ENCODE measurements at regions of chr2 and their contacts with region 1.

Region 1: DNA sequence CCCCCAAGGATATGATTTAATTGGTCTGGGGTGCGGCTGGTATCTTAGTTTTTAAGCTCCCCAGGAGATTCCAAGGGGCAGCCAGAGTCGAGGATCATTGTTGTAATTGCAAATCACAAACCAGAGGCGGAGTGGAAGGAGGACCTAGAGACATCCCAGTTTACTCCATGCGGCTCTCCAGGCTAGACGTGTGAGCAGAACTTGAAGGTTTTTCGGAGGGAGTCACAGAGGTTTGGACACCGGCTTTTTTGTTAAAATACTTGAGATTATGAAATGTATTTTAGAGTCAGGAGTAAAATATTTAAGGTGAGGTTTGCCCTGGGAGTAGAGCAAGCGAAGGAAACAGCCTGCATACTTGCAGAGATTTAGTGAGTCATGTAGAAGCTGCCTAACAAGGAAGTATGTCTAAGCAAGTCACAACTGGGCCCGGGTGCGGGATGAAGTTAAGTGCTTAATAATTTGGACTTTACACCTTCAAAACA is 39.5 kb downstream of the TGOLN2 start:
- DNase-seq: no peak
- CTCF ChIP-seq: no peak

Region 2: DNA sequence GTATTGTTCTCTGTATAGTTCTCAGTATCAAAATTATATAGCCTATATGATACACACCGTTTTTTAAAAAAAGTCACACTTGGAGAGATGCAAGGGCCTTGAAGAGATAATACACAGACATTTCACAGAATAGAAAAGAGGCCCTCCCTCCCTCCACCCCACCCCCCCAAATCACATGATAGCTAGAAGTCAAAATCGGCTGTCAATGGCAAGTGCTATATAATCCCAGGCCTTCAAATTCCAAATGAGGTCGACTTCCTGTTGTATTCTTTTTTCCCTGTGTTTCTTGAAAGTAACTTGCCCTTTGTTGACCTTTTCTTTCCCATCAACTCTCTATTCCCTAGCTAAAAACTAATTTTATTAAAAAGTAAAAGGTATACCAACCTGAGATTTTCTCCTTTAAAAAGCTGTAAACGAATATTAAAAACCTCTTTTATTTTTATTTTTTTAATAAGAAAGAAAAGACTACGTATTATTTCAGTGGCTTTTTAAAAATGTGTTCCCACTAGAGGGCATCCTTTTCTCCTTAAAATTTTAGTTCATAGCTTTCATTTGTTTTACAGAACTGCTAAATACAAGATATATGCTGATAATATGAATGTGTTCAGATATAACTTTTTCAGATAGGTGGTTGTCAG is 270.8 kb before region 1 on chr2:
- CTCF ChIA-PET with region 1: interaction called, 12 read pairs
- POLR2A ChIA-PET with region 1: no interaction called
- DNase-seq: no peak
- CTCF ChIP-seq: no peak

Region 3: GRCh38 chr2:85066874-85067351 is 221.4 kb before region 1 on chr2:
- CTCF ChIA-PET with region 1: interaction called, 25 read pairs
- POLR2A ChIA-PET with region 1: no interaction called
- DNase-seq: peak; percentile 62
- CTCF ChIP-seq: peak; percentile 44

Region 4: GRCh38 chr2:85266146-85267041 is 21.9 kb before region 1 on chr2:
- CTCF ChIA-PET with region 1: interaction called, 32 read pairs
- POLR2A ChIA-PET with region 1: no interaction called
- DNase-seq: peak; percentile 78
- CTCF ChIP-seq: peak; percentile 82

Region 5: DNA sequence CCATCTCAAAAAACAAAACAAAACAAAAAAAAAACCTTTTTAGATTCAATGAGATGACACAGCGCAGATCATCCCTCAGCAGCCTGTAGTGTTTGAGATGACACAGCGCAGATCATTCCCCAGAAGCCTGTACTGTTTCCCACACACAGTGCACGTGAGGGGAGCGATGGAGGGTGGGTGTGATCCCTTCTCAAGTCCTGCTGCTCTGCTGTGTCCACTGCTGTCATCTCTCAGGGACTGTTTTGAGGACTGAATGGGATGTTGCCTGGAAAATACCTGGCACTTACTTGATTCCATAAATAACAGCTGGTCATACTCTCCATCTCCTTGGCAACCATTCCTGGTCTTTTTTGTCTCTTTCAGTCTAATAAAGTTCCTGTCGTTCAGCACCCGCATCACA is 13.8 kb after region 1 on chr2:
- CTCF ChIA-PET with region 1: interaction called, 119 read pairs
- POLR2A ChIA-PET with region 1: no interaction called
- DNase-seq: no peak
- CTCF ChIP-seq: no peak